Activated T-helper 2 cell treated with anti-CD3 and anti-CD28 coated beads, Interferon-gamma antibody, Interleukin-2, Interleukin-4, amounts not matched to agents 10 μg/mL and 5 μg/mL and 100 μg/mL, durations not matched to agents 14 hours and 24 hours and 36 hours (primary cell): ENCODE measurements at regions of chr1 and their contacts with region 1.

Region 1: GRCh38 chr1:53765657-53766056 is 26.7 kb upstream of the GLIS1 start:
- DNase-seq: no peak
- H3K4me3 Mint-ChIP-seq: no peak overlapping the region
- H3K27ac Mint-ChIP-seq: peak overlapping the region; percentile 72
- H3K4me1 Mint-ChIP-seq: peaks cover 28% of the 10 kb centered on the region
- H3K27me3 Mint-ChIP-seq: no peaks in the 10 kb centered on the region

Region 2: DNA sequence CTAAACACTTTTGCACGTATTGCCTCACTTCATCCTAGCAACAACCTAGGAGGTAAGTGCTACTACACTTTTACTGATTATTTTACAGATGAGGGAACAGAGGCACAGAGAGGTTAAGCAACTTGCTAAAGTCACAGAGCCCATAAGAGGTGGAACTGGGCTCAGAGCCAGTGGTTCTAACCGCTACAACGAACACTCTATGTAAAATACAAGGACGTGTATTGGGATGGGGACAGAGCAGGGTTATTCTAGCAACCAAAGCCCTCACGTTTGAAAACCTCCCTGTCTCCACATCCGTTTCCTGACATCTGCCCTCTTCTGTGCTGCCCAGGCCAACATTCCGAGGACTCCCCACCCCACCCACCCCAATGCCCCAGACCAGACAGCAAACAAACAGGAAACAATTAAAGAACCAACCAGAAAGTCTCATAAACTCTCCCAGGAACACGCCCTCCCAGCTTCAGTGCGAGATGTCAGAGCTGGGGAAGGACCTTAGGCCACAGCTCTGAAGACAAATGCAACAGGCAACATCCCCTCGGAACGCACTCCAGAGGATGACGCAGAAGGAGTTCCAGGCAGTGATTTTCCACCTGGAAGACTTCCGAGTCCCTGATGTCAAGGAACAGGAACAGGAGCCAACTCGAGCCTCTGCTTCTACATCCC is 67.8 kb before region 1 on chr1:
- intact Hi-C with region 1: no loop called
- DNase-seq: no peak
- H3K4me3 Mint-ChIP-seq: no peak overlapping the region
- H3K27ac Mint-ChIP-seq: no peak overlapping the region
- H3K4me1 Mint-ChIP-seq: no peaks in the 10 kb centered on the region
- H3K27me3 Mint-ChIP-seq: no peaks in the 10 kb centered on the region

Region 3: DNA sequence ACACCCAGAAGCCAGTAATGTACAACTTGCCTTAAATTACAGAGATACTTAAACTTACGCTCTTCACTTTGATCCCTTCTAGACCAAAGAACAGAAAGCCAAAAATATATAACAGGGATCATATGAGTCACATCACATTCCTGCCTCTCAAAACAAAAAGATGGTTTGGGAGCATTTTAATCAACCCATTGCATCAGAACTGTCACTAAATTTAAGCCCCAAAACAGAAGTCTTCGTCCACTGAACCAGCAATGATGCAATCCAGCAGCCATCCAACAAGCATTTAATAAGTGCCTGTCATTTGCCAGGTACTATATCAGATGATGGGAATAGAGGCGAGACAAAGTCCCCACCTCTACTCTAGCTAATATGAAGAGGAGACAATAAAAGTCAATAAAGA is 16.0 kb after region 1 on chr1:
- intact Hi-C with region 1: loop called (anchors 2 kb)
- DNase-seq: no peak
- H3K4me3 Mint-ChIP-seq: no peak overlapping the region
- H3K27ac Mint-ChIP-seq: no peak overlapping the region
- H3K4me1 Mint-ChIP-seq: peaks cover 28% of the 10 kb centered on the region
- H3K27me3 Mint-ChIP-seq: no peaks in the 10 kb centered on the region